Breast epithelium (tissue), 4 donors: ENCODE measurements at regions of chr1 and their contacts with region 1.

Region 1: DNA sequence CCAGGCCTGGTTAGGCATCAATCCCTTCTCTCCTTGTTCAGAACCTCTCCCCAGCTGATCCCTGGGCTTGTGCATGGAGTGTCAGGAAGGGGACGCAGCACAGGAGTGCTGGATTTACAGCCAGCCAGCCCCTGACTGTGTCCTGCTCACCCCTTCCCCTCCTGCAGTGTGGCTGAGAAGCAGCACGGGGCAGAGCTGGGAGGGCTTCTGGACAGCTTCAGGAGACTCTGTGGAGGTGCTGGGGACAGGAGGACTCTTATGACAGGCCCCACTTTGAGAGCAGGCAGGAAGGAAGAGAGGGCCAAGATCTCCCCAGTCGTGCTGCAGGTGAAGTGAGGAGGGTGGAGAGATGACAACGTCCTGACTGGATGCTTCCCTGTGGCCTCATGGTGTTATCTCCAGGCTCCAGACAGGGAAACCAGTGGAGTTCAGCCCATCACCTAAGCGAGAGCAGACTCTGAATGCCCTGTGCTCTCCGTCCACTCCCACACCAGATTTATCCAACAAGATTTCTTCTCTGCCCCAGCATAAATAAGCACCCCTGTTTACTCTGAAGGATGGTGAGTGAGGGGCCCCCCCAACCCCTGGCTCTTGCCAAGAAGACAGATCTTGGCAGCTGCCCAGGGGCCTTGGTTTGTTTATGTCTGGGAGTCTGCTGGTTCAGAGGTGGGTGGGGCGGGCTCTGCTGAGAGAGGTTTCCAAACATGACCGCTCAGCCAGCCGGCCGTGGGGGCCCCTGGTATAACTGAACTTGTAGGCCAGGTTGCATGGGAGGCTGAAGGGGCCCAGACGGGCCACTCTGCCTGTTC is 21.3 kb downstream of the TMCC2 start:
- DNase-seq: peak in 1 of 2 donors; percentile 62
- H3K4me3 ChIP-seq: no peak overlapping the region
- H3K27ac ChIP-seq: peak overlapping the region in 1 of 2 donors; percentile 25
- H3K4me1 ChIP-seq: peaks cover 8 to 13% of the 10 kb centered on the region in 2 donors
- H3K27me3 ChIP-seq: no peaks in the 10 kb centered on the region
- CTCF ChIP-seq: no peak
- POLR2A ChIP-seq: no peak

Region 2: DNA sequence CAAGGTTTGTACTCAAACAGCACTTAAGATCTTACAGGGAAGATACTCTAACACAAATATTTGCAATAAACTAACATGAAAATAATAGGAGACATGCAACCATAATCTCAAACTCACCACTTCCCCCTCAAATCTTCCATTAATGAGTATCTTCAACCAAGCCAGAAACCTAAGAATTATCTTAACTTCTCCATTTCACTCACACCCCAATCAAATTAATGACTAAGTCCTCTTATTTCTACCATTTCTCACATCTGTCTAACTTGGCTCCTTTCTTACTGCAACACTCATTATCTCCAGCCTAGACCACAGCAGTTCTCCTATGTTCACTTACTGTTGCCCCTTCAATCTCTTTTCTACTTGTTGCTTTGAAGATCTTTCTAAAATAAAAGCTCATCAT is 137.6 kb before region 1 on chr1:
- intact Hi-C with region 1: loop called (anchors 10 kb)
- DNase-seq: no peak
- H3K4me3 ChIP-seq: no peak overlapping the region
- H3K27ac ChIP-seq: no peak overlapping the region
- H3K4me1 ChIP-seq: no peaks in the 10 kb centered on the region
- H3K27me3 ChIP-seq: no peaks in the 10 kb centered on the region
- CTCF ChIP-seq: no peak
- POLR2A ChIP-seq: no peak

Region 3: DNA sequence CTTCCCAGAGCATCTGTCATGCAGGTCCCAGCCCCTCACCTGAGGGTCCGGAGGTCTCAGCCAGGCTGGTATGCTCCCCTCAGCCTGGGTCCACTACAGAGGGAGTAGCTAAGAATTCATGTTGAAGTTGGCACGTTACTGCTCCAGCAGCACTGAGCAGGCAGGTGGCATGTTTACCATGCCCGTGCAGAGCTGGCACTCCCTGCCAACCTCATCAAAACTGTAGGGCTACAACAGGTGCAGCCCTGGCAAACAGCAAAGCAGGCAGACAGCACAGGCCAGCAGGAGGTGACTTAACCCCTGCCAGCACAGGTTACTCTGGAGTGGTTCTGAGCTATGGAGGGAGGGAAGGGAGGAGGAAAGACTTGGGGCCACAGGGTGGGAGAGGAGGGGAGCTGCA is 26.1 kb after region 1 on chr1:
- intact Hi-C with region 1: no loop called
- DNase-seq: peak; percentile 38 to 66
- H3K4me3 ChIP-seq: no peak overlapping the region
- H3K27ac ChIP-seq: no peak overlapping the region
- H3K4me1 ChIP-seq: no peaks in the 10 kb centered on the region
- H3K27me3 ChIP-seq: no peaks in the 10 kb centered on the region
- CTCF ChIP-seq: no peak
- POLR2A ChIP-seq: no peak